Activated CD8-positive, alpha-beta T cell treated with anti-CD3 and anti-CD28 coated beads, Interleukin-2, amount 10 ng/mL, durations not matched to agents 7 days and 5 days (primary cell): ENCODE measurements at regions of chr1 and their contacts with region 1.

Region 1: GRCh38 chr1:226626577-226626956 is 78.0 kb downstream of the STUM start:
- DNase-seq: peak; percentile 83
- ATAC-seq: peak; percentile 91
- H3K4me3 Mint-ChIP-seq: no peak overlapping the region
- H3K27ac Mint-ChIP-seq: no peak overlapping the region
- H3K4me1 Mint-ChIP-seq: peaks cover 11% of the 10 kb centered on the region
- H3K27me3 Mint-ChIP-seq: peaks cover 1% of the 10 kb centered on the region

Region 2: GRCh38 chr1:226466296-226466695 is 160.3 kb before region 1 on chr1:
- CTCF ChIA-PET with region 1: no interaction called
- POLR2A ChIA-PET with region 1: no interaction called
- DNase-seq: no peak
- ATAC-seq: no peak
- H3K4me3 Mint-ChIP-seq: no peak overlapping the region
- H3K27ac Mint-ChIP-seq: no peak overlapping the region
- H3K4me1 Mint-ChIP-seq: no peaks in the 10 kb centered on the region
- H3K27me3 Mint-ChIP-seq: peaks cover 17% of the 10 kb centered on the region

Region 3: DNA sequence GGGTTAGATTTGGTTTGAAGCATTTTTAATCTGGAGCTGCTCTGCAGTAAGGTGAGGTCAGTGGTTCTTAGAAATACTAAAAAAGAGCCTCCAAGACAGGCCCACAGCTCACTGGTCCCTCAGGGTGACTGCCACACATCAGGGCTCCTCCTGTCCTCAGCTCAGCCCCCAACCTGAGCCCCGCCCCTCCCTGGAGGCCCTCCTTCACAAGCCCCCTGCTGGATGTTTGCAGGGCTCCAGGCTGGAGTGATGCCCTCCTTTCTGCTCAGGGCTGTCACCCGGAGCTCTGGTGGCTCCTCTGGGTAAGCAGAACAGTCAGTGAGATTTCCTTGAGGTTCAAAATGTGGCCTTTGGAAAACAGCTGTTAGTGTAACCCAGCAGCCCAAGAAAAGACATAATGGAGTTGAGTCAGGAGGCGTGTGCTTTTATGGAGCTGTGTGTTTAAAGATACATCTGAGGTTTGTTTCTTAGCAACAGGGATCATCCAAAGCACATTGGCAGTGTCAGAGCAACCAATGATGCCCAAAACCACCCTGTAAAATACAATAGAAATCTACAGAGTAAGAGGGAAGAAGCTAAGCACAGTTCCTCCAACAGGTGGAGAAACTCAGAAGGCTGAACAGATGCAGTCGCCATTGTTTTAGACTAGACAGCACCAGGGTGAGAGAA is 56.6 kb before region 1 on chr1:
- CTCF ChIA-PET with region 1: no interaction called
- POLR2A ChIA-PET with region 1: no interaction called
- DNase-seq: peak; percentile 33
- ATAC-seq: peak; percentile 88
- H3K4me3 Mint-ChIP-seq: no peak overlapping the region
- H3K27ac Mint-ChIP-seq: no peak overlapping the region
- H3K4me1 Mint-ChIP-seq: no peaks in the 10 kb centered on the region
- H3K27me3 Mint-ChIP-seq: peaks cover 3% of the 10 kb centered on the region

Region 4: GRCh38 chr1:226608699-226609505 is 17.7 kb before region 1 on chr1:
- CTCF ChIA-PET with region 1: interaction called, 10 read pairs
- POLR2A ChIA-PET with region 1: no interaction called
- DNase-seq: peak; percentile 73
- ATAC-seq: peak; percentile 83
- H3K4me3 Mint-ChIP-seq: no peak overlapping the region
- H3K27ac Mint-ChIP-seq: no peak overlapping the region
- H3K4me1 Mint-ChIP-seq: no peaks in the 10 kb centered on the region
- H3K27me3 Mint-ChIP-seq: peaks cover 3% of the 10 kb centered on the region

Region 5: DNA sequence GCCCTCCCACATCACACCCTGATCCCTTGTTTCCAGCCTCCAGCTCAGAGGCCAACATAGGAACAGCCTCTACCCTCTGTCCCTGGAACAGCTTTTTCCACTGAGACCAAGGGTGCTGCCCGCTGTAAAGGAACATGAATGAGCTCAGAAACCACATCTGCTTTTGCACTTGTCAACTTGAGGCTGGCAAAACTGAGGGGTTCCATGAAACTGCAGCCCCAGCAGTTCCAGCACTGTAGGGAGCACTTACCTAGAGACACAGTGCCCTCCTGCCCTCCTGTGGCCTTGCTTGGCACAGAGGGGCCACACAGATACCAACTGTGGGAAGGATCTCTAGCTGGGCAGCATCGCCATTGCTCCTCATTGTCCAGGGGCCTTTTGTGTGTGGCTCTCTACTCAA is 60.9 kb after region 1 on chr1:
- CTCF ChIA-PET with region 1: interaction called, 11 read pairs
- POLR2A ChIA-PET with region 1: no interaction called
- DNase-seq: peak; percentile 51
- ATAC-seq: peak; percentile 35
- H3K4me3 Mint-ChIP-seq: no peak overlapping the region
- H3K27ac Mint-ChIP-seq: peak overlapping the region; percentile 50
- H3K4me1 Mint-ChIP-seq: peaks cover 94% of the 10 kb centered on the region
- H3K27me3 Mint-ChIP-seq: no peaks in the 10 kb centered on the region

Region 6: DNA sequence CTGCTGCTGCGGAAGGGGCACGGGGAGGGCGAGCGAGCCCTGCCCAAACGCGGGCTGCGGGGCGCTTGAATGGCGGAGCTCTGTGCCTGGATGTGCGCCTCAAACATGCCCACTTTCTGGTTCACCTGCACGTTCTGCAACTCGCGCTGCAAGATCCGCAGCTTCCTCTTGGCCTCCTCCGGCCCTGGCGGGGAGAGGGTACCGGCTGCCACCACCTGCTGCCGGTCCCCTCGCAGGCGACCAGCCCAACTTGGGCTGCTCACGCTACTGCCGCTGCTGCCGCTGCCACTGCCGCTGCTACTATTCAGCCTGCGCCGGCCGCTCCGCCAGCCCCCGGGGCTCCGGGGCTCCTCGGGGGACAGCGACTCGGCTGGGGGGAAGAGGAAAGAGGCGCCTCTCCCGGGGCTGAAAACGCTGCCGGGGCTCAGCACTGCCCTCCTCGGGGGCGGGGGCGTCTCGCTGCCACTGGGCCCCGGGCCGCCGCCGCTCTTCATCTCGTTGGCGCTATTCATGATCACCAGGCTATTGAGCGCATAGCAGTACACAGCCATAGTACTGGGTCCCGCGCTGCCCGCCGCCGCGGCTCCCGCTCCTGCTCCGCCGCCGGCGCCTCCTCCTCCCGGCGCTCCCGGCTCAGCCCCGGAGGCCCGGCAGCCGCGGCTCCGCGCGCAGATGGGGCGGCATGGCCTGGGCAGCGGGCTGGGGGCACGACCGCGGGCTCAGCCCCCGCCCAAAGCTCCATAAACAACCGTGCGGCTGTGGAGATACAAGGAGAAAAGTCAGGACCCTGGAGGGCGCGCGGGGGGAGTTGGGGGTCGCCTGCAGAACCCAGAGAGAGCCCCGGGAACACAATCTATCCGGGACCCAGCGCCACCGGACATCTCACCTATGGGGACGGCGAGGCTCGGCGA is 110.6 kb after region 1 on chr1:
- CTCF ChIA-PET with region 1: interaction called, 10 read pairs
- POLR2A ChIA-PET with region 1: no interaction called
- DNase-seq: peak; percentile 69
- ATAC-seq: peak; percentile 43
- H3K4me3 Mint-ChIP-seq: peak overlapping the region; percentile 91
- H3K27ac Mint-ChIP-seq: peak overlapping the region; percentile 90
- H3K4me1 Mint-ChIP-seq: peaks cover 56% of the 10 kb centered on the region
- H3K27me3 Mint-ChIP-seq: no peaks in the 10 kb centered on the region

Region 7: GRCh38 chr1:226846801-226847200 is 220.2 kb after region 1 on chr1:
- CTCF ChIA-PET with region 1: interaction called, 10 read pairs
- POLR2A ChIA-PET with region 1: no interaction called
- DNase-seq: no peak
- ATAC-seq: no peak
- H3K4me3 Mint-ChIP-seq: no peak overlapping the region
- H3K27ac Mint-ChIP-seq: no peak overlapping the region
- H3K4me1 Mint-ChIP-seq: peaks cover 7% of the 10 kb centered on the region
- H3K27me3 Mint-ChIP-seq: no peaks in the 10 kb centered on the region